Ovary (tissue), 10 donors: ENCODE measurements at regions of chr14 and their contacts with region 1.

Region 1: DNA sequence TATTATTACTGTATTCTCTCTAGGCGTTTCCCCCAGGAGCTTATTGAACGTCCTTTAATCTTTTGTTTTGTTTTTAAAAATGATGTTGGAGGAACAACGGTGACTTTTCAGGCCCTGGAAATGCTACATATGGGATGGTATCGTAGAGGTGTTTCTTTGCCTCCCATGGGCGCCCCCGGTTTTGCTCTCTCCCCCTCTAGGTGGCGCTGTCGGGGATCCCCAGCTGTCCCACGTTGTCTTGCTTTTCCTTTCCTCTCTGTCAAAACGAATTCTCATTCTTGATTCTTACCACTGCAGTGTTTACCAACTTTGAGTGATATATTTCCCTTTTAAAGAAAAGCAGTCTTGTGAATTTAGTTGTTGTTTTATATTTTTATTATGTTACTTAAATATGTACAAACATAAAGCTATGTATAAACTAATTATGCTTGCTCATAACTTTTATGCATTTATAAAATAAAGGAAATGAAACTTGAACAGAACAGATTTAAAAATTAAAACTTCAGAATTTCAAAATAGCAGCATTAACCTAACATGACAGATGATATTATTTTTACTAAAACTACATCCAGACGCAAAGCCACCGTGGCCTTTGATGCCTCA is 171.9 kb downstream of the RGS6 start:
- DNase-seq: no peak
- H3K4me3 ChIP-seq: no peak overlapping the region
- H3K27ac ChIP-seq: no peak overlapping the region
- H3K4me1 ChIP-seq: no peaks in the 10 kb centered on the region
- H3K27me3 ChIP-seq: no peaks in the 10 kb centered on the region
- CTCF ChIP-seq: no peak
- EP300 ChIP-seq: no peak
- POLR2A ChIP-seq: no peak

Region 2: DNA sequence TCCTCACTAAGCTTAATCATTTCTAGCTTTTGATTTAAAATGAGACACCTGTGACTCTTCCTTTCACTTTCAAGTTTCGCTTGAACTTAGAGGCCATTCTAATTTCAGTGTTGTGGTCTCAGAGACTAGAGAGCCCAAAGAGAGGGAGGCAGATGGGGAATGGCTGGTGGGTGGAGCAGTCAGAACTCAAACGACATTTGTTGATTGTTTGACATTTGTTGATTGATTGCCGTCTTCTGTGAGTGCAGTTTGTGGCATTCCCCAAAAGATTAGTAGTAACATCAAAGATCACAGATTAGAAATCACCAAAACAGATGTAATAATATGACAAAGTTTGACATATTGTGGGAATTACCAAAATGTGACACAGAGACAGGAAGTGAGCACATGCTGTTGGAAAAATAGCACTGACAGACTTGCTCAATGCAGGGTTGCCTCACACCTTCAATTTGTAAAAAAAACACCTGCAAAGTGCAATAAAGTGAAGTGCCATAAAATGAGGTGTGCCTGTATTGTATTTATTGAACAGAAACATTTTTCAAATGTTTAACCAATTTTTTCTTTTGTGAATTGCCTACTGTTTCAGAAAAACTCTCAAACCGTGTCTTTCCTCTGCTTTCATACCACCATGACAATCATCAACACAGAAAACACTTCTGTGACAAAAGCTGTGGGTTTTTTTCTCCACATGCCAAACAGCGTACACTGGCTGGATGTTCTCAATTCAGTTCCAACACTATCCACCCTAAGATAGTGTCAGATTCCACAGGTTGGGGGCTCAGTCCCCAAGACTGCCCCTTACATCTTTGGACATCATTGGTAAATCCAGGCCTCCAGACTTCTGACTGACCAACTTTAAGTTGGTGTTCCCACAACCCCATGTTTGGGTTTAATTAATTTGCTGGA is 548.2 kb before region 1 on chr14:
- intact Hi-C with region 1: no loop called
- DNase-seq: no peak
- H3K4me3 ChIP-seq: no peak overlapping the region
- H3K27ac ChIP-seq: no peak overlapping the region
- H3K4me1 ChIP-seq: no peaks in the 10 kb centered on the region
- H3K27me3 ChIP-seq: no peaks in the 10 kb centered on the region
- CTCF ChIP-seq: no peak
- EP300 ChIP-seq: no peak
- POLR2A ChIP-seq: no peak

Region 3: GRCh38 chr14:72084935-72085334 is 19.2 kb before region 1 on chr14:
- intact Hi-C with region 1: loop called in 1 of 4 experiments (anchors 1 kb)
- DNase-seq: no peak
- H3K4me3 ChIP-seq: no peak overlapping the region
- H3K27ac ChIP-seq: no peak overlapping the region
- H3K4me1 ChIP-seq: no peaks in the 10 kb centered on the region
- H3K27me3 ChIP-seq: no peaks in the 10 kb centered on the region
- CTCF ChIP-seq: no peak
- EP300 ChIP-seq: no peak
- POLR2A ChIP-seq: no peak

Region 4: GRCh38 chr14:72308967-72309485 is 204.9 kb after region 1 on chr14:
- intact Hi-C with region 1: no loop called
- DNase-seq: no peak
- H3K4me3 ChIP-seq: no peak overlapping the region
- H3K27ac ChIP-seq: no peak overlapping the region
- H3K4me1 ChIP-seq: peaks cover 16% of the 10 kb centered on the region
- H3K27me3 ChIP-seq: no peaks in the 10 kb centered on the region
- CTCF ChIP-seq: no peak
- EP300 ChIP-seq: no peak
- POLR2A ChIP-seq: no peak